GM12878 (cell line): ENCODE measurements at regions of chr1 and their contacts with region 1.

Region 1: DNA sequence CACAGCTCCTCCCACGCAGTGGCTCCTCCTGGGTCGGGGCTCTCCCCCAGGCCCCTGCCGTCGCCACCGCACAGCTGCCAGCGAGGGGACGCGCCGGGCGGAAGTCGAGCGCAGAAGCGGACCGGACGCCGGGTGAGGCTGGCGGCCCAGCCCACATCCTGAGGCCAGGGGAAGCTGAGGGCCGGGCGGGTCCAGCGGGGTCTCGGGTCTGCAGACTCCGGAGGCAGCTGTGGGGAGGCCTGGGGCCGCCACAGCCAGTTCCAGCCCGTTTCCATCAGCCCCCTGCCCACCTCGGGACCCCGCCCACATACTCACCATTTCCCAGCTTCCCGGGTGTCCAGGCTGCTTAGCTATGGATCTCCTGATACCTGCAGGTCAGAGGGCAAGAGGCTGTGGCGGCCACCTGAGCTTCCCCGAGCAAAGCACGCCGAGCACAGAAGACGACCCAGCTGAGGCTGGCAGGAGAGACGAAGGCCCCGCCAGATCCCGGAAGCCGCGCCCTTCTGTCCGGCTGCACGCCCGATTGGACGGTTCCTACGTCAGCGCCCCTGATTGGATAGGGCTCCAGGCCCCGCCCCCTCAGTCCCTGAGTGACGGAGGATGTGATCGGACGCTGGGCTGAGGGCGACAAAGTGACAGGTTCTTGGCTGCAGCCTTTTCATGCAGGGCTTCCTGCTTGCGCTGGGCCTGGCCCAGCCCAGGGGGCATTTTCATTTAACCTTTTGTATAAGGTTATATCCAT is 38.7 kb upstream of the ZNF124 start:
- DNase-seq: peak; percentile 87
- ATAC-seq: peak; percentile 91
- H3K4me3 ChIP-seq: peak overlapping the region; percentile 66
- H3K27ac ChIP-seq: peak overlapping the region; percentile 91
- H3K4me1 ChIP-seq: peaks cover 21% of the 10 kb centered on the region
- H3K27me3 ChIP-seq: no peaks in the 10 kb centered on the region
- CTCF ChIP-seq: no peak
- EP300 ChIP-seq: no peak
- POLR2A ChIP-seq: peak; percentile 97
- RAD21 ChIP-seq: no peak

Region 2: DNA sequence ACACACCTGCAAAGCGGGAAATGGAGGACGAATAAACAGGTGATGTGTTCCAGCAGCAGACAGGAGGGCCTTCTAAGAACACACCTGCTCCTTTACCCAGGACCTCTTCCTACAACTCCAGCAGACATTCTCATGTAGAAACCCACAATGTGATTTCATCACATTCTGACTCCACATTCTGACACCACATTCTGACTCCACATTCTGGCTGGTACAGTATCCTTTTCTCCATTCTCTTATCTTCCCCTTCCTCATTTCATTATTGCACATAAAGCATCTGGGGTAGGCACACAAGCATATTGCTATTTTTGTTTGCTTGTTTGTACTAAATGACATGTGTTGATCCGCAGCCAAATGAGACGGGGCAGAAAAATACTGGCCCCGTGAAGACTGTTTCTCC is 35.1 kb before region 1 on chr1:
- CTCF ChIA-PET with region 1: no interaction called
- POLR2A ChIA-PET with region 1: no interaction called
- RAD21 ChIA-PET with region 1: no interaction called
- SMC1A ChIA-PET with region 1: no interaction called
- in situ Hi-C with region 1: no loop called
- intact Hi-C with region 1: no loop called
- DNase-seq: no peak
- ATAC-seq: no peak
- H3K4me3 ChIP-seq: no peak overlapping the region
- H3K27ac ChIP-seq: no peak overlapping the region
- H3K4me1 ChIP-seq: no peaks in the 10 kb centered on the region
- H3K27me3 ChIP-seq: no peaks in the 10 kb centered on the region
- CTCF ChIP-seq: no peak
- EP300 ChIP-seq: no peak
- POLR2A ChIP-seq: no peak
- RAD21 ChIP-seq: no peak

Region 3: DNA sequence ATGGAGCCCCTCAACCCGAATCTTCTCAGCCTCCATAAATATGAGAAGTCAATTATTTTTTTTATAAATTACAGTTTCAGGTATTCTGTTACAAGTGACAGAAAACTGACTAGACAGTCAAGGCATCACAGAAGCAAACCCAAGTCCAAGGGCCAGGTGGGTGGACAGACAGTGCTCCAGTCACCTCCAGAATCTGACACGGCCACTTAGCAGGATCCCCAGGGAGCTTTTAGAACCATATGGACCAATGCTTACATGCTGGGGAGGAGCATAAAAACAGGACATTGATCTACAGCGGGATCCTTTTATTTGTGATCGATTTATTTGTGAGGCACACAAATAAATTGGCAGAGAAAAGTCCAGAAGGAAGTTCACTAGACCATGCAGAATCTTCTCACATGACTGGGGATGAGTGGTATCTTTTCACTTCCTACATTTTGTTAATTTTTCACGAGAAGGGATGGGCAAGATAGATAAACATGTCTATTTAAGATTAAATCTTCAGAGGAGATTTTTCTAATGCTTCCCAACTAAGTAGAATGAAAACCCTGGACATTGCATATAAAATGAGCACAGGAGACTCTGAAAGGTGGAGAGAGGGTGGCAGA is 106.1 kb after region 1 on chr1:
- CTCF ChIA-PET with region 1: no interaction called
- POLR2A ChIA-PET with region 1: no interaction called
- RAD21 ChIA-PET with region 1: interaction called, 3 read pairs
- SMC1A ChIA-PET with region 1: interaction called, 3 read pairs
- in situ Hi-C with region 1: no loop called
- intact Hi-C with region 1: loop called (anchors 5 kb)
- DNase-seq: no peak
- ATAC-seq: peak; percentile 46
- H3K4me3 ChIP-seq: no peak overlapping the region
- H3K27ac ChIP-seq: no peak overlapping the region
- H3K4me1 ChIP-seq: no peaks in the 10 kb centered on the region
- H3K27me3 ChIP-seq: no peaks in the 10 kb centered on the region
- CTCF ChIP-seq: no peak
- EP300 ChIP-seq: no peak
- POLR2A ChIP-seq: no peak
- RAD21 ChIP-seq: no peak

Region 4: GRCh38 chr1:247357781-247358211 is 147.2 kb after region 1 on chr1:
- CTCF ChIA-PET with region 1: interaction called, 3 read pairs
- POLR2A ChIA-PET with region 1: interaction called, 6 read pairs
- RAD21 ChIA-PET with region 1: interaction called, 3 read pairs
- SMC1A ChIA-PET with region 1: interaction called, 4 read pairs
- in situ Hi-C with region 1: no loop called
- intact Hi-C with region 1: loop called (anchors 5 kb)
- DNase-seq: peak; percentile 77
- ATAC-seq: peak; percentile 92
- H3K4me3 ChIP-seq: peak overlapping the region; percentile 25; the same call in 1 of the 2 replicates
- H3K27ac ChIP-seq: no peak overlapping the region
- H3K4me1 ChIP-seq: peaks cover 13% of the 10 kb centered on the region
- H3K27me3 ChIP-seq: no peaks in the 10 kb centered on the region
- CTCF ChIP-seq: no peak
- EP300 ChIP-seq: peak; percentile 41 to 69; a peak in 3 of 4 replicates
- POLR2A ChIP-seq: no peak
- RAD21 ChIP-seq: no peak